Sigmoid colon (tissue), 7 donors: ENCODE measurements at regions of chr17 and their contacts with region 1.

Region 1: GRCh38 chr17:75182569-75183450 is at the start of gene SUMO2:
- DNase-seq: peak; percentile 97
- H3K4me3 ChIP-seq: peak within 1 kb of the TSS; percentile 79 to 100 (median 100)
- H3K27ac ChIP-seq: peak within 1 kb of the TSS; percentile 92 to 99 (median 98)
- H3K4me1 ChIP-seq: peaks cover 0 to 37% (median 25%) of the 10 kb centered on the region in 4 donors
- H3K27me3 ChIP-seq: no peaks in the 10 kb centered on the region
- CTCF ChIP-seq: peak in 1 of 4 experiments; percentile 46
- EP300 ChIP-seq: no peak
- POLR2A ChIP-seq: peak; percentile 36 to 62
- total RNA-seq, gene SUMO2: 63.0 to 109 (median 87.1) TPM

Region 2: DNA sequence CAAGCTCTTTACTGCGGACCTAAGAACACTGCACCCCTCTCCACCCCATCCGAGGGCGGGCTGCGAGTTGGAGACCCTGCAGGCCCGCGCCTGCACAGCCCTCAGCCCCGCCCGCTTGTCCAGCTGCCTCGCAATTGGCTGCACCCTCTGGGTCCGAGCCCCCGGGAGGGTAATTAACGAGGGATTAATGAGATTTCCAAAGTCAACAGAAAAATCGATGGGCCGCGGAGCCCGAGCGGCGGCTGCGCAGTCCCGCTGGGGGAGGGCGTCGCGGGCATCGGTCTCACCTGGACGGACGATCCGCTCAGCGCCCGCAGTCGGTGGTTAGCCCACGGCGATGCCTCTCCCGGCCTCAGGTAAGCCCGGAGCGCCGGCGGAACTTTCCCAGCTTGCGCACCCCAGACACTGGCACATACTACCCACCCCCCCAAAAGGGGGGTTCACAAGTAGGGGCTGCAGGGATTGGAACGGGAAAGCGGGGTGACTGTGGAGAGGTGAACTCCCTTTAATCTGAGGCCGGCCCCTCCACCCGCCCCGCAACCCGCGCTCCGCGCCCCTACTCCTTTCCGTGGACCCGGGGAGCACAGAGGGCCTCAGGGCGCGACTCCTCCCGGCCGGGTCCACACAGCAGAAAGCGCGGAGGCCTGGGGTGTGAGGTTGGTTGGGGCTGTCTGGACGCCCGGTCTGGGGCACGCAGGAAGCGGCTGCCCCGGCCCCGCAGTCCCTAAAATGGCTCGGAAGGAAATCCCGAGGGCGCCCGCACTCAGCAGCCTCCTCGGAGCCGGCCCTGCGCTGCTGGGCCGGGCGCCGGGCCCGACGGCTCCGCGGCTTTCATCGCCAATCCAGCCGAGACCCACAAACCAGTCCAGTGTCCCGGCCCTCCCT is 247.0 kb before region 1 on chr17 and contains the start of gene OTOP3:
- intact Hi-C with region 1: no loop called
- DNase-seq: no peak
- H3K4me3 ChIP-seq: no peak within 1 kb of the TSS
- H3K27ac ChIP-seq: no peak within 1 kb of the TSS
- H3K4me1 ChIP-seq: peaks cover 0 to 13% (median 8%) of the 10 kb centered on the region in 4 donors
- H3K27me3 ChIP-seq: peaks cover 24 to 79% (median 38%) of the 10 kb centered on the region in 3 donors
- CTCF ChIP-seq: no peak
- EP300 ChIP-seq: no peak
- POLR2A ChIP-seq: no peak
- total RNA-seq, gene OTOP3: not detected

Region 3: GRCh38 chr17:75046582-75047289 is 136.1 kb before region 1 on chr17 and contains the starts of genes ATP5PD and KCTD2:
- intact Hi-C with region 1: loop called (anchors 5 kb)
- DNase-seq: peak; percentile 99
- H3K4me3 ChIP-seq: peak within 1 kb of the TSS; percentile 78 to 99 (median 92)
- H3K27ac ChIP-seq: peak within 1 kb of the TSS; percentile 96 to 100 (median 98)
- H3K4me1 ChIP-seq: peaks cover 0 to 35% (median 28%) of the 10 kb centered on the region in 4 donors
- H3K27me3 ChIP-seq: no peaks in the 10 kb centered on the region
- CTCF ChIP-seq: no peak
- EP300 ChIP-seq: no peak
- POLR2A ChIP-seq: peak; percentile 97 to 98
- total RNA-seq, gene ATP5PD: 303 to 480 (median 367) TPM
- total RNA-seq, gene KCTD2: 19.6 to 25.5 (median 21.8) TPM

Region 4: DNA sequence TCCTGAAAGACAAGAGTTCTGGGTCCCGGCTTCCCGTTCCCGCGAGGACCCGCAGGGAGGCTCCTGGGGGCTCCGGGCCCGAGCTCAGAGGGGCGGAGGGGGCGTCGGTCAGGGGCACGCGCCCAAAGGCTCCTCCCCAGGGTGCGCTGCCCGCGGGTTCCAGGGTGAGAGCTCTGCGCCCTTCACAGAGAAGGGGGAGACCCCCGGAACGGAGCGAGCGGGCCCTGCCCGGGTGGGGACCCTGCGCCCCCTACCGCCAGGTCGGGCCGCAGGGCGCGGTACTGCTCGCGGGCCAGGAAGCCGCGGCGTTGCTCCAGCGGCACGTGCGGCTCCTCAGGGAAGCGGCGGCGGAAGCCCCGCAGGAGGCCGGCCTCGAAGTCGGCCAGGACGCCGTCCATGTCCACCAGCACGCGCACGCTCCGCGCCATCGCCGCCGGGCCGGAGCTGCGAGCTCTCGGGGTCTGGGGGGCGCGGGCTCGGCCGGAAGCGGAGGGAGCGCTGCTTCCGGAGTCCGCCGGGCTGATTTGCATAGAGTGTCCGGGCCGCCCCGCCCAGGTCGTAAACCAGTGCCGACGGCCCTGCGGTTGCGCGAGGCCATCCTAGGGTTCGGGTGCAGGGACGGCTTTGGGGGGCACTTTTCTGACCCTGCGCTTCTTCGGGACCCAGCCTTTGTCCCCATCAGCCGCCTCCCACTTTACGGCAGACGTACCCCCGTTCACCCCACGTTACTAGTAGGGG is 51.4 kb before region 1 on chr17 and contains the start of gene NT5C:
- intact Hi-C with region 1: loop called (anchors 5 kb)
- DNase-seq: peak; percentile 91
- H3K4me3 ChIP-seq: peak within 1 kb of the TSS; percentile 68 to 86 (median 74)
- H3K27ac ChIP-seq: peak within 1 kb of the TSS; percentile 88 to 91 (median 88)
- H3K4me1 ChIP-seq: peaks cover 0 to 23% (median 11%) of the 10 kb centered on the region in 4 donors
- H3K27me3 ChIP-seq: no peaks in the 10 kb centered on the region
- CTCF ChIP-seq: peak; percentile 43 to 72 (median 58)
- EP300 ChIP-seq: no peak
- POLR2A ChIP-seq: no peak
- total RNA-seq, gene NT5C: 60.7 to 109 (median 82.4) TPM

Region 5: GRCh38 chr17:75209061-75209460 is 26.3 kb after region 1 on chr17:
- intact Hi-C with region 1: no loop called
- DNase-seq: no peak
- H3K4me3 ChIP-seq: no peak overlapping the region
- H3K27ac ChIP-seq: no peak overlapping the region
- H3K4me1 ChIP-seq: peaks cover 0 to 27% (median 20%) of the 10 kb centered on the region in 4 donors
- H3K27me3 ChIP-seq: no peaks in the 10 kb centered on the region
- CTCF ChIP-seq: no peak
- EP300 ChIP-seq: no peak
- POLR2A ChIP-seq: no peak